Prostate gland (tissue), 2 donors: ENCODE measurements at regions of chr2 and their contacts with region 1.

Region 1: GRCh38 chr2:43484323-43484930 is 111.4 kb downstream of the THADA start:
- DNase-seq: peak; percentile 34
- H3K4me3 ChIP-seq: no peak overlapping the region
- H3K27ac ChIP-seq: peak overlapping the region; percentile 67 to 69
- H3K4me1 ChIP-seq: no peaks in the 10 kb centered on the region
- H3K27me3 ChIP-seq: no peaks in the 10 kb centered on the region
- CTCF ChIP-seq: peak; percentile 28 to 92 (median 82)
- POLR2A ChIP-seq: no peak

Region 2: DNA sequence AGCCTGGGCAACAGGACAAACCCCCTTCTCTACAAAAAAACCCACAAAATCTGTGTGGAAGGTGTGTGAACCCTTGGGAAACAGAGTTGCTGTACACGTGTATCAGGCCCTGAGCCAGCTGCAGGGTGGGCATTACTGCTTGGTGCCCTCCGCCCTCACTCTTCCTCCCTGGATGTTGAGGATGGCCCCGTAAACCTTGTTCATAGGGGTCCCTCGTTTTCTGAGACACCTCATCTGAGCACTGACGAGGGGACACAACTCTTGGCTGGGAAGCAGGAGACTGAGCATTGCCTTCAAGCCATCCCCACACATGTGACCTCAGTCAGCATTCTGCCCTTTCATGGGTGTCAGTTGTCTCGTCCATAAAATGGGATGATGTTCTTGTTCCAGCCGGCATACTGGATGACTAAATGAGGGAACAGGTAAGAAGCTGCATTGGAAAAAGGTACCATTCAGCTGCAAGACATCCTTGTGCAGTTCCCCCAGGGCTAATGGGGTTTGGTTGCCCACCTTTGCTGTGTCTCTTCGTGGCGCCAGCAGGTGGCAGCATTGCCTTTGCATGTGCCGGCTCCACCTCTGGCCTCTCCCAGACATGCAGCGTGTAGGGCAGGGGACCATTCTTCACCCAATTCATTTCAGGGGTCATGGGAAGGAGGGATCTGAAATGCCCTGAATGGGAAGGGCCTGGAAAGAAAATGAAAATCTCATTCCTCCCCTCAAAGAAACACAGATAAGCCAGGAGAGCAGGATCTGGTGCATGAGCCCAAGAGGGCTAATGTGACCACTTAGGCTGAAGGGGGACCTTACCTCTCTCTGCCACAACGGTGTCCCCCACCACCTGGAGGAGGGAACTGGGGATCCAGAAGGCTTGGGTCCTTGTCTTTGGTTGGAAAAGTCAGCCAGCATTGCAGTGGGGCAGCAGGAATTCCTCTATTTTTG is 655.7 kb before region 1 on chr2:
- intact Hi-C with region 1: loop called (anchors 5 kb)
- DNase-seq: peak; percentile 49
- H3K4me3 ChIP-seq: no peak overlapping the region
- H3K27ac ChIP-seq: peak overlapping the region in 1 of 2 donors; percentile 20
- H3K4me1 ChIP-seq: peaks cover under 1% of the 10 kb centered on the region
- H3K27me3 ChIP-seq: no peaks in the 10 kb centered on the region
- CTCF ChIP-seq: peak; percentile 66 to 94 (median 88)
- POLR2A ChIP-seq: no peak

Region 3: DNA sequence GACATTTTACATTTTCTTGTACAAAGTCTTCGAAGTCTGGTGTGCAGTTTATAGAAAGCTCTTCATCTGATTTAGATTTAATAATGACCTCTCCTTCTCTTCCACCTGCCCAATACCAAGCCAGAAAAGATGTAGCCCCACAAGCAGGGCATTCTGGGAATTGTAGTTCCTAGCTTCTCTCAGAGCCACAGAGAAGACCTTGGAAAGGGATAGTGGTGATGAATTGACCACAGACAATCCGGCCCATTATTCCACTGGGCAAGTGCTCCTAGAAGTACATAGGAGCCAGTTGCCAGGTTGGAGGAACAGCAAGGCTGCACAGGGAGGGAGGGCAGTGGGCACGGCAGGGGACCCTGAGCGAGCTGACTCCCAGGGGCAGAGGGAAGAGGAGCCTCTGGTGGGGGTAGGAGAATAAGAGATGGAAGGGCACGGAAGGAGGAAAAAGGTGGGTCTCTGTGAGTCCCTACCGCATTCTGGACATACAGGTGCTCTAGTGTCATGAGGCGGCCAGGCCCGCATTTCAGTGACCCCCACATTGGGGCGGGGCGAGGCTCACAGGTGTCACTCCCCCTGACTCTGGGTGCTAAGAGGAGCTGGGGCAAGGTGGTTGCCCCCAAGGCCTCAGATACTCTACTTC is 539.5 kb before region 1 on chr2:
- intact Hi-C with region 1: loop called (anchors 5 kb)
- DNase-seq: no peak
- H3K4me3 ChIP-seq: no peak overlapping the region
- H3K27ac ChIP-seq: no peak overlapping the region
- H3K4me1 ChIP-seq: no peaks in the 10 kb centered on the region
- H3K27me3 ChIP-seq: no peaks in the 10 kb centered on the region
- CTCF ChIP-seq: no peak
- POLR2A ChIP-seq: no peak

Region 4: GRCh38 chr2:42974721-42975717 is 509.4 kb before region 1 on chr2:
- intact Hi-C with region 1: loop called (anchors 2 kb)
- DNase-seq: peak; percentile 64
- H3K4me3 ChIP-seq: peak overlapping the region; percentile 18 to 29
- H3K27ac ChIP-seq: peak overlapping the region; percentile 46 to 65
- H3K4me1 ChIP-seq: no peaks in the 10 kb centered on the region
- H3K27me3 ChIP-seq: no peaks in the 10 kb centered on the region
- CTCF ChIP-seq: peak; percentile 88 to 96 (median 92)
- POLR2A ChIP-seq: no peak

Region 5: DNA sequence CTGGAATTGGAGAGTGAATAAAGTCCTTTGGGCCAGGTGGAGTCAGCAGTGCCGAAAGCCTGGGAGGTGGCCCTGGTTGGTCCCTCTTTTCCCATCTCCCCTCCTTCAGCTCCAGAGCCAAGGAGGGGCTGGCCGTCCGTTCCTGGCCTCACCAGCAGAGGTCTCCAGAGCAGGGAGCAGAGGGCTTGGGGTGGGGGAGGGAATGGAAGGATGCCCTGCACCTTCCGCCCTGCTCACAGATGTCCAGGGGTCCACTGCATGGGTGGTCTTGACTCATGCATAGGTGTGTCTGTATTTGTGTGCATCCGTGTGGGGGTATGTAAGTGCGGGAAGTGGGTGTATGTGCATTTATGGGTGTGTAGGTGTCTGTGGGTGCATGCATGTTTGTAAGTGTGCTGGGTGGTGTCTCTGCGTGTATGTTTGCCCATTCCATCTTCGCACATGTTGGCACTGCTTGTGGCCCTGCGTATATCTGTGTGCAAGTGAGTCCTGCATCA is 459.9 kb before region 1 on chr2:
- intact Hi-C with region 1: loop called (anchors 5 kb)
- DNase-seq: peak; percentile 32
- H3K4me3 ChIP-seq: no peak overlapping the region
- H3K27ac ChIP-seq: no peak overlapping the region
- H3K4me1 ChIP-seq: no peaks in the 10 kb centered on the region
- H3K27me3 ChIP-seq: no peaks in the 10 kb centered on the region
- CTCF ChIP-seq: peak; percentile 62 to 81 (median 72)
- POLR2A ChIP-seq: no peak

Region 6: DNA sequence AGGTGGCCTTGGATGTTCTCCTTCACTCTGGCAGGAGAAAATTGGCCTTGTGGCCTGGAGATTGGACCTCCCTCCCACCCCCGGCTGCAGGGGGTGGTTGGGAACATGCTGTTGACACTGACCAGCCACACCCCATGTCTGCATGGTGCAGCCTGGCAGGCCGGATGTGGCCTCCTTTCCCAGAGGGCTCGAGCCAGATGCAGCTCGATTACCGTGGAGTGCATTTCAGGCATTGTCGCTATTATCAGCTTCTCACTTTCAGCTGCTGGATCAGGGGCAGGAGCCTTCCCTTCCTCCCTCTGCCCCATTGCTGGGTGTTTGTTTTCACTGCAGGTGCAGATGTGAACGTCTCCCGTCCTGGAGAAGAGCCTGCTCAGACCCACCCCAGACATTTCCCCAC is 1735.8 kb after region 1 on chr2:
- intact Hi-C with region 1: no loop called
- DNase-seq: no peak
- H3K4me3 ChIP-seq: no peak overlapping the region
- H3K27ac ChIP-seq: no peak overlapping the region
- H3K4me1 ChIP-seq: no peaks in the 10 kb centered on the region
- H3K27me3 ChIP-seq: no peaks in the 10 kb centered on the region
- CTCF ChIP-seq: no peak
- POLR2A ChIP-seq: no peak